B cell (primary cell): ENCODE measurements at regions of chr6 and their contacts with region 1.

Region 1: DNA sequence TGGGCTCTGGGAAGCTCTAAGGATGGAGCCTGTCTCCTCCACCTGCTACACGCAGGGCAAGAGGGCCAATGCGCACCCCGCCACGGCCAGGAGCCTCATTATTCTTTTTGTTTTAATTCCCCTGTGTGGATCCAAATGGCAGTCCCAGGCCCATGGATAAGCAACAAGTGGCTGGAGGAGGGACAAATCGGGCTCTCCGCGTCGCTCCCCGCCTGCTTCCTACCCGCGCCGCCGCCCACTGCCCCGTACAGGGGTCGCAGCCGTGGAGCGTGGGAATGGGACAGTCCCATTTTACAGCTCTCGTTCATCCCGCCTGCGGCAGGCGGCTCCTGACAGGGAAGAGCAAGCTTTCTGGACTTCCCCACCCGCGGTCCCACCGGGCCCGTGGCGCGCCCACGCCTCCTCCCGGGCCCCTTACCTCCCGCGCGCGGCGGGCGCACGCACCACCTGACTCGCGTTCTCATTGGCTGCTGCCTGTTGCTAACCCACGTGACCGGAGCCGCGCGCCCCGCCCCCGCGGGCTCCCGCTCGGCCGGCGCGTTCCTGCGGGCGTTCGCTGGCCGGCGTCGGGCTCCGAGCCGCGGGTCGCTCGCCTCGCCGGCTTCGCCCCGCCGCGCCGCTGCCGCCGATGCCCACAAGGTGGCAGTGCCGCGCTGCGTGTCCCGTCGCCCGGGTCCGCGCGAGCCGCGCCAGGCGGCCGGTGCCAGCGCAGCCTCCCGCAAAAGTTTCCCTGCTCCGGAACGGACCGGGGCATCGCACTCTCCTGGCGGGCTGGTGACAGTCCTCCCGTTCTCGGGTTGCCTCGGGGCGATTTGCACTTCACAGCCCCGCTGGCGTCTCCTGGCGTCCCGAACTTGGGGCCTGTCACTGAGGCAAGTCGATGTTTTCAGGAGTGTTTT is 93.3 kb downstream of the CD83 start:
- DNase-seq: peak; percentile 96
- ATAC-seq: peak; percentile 91
- H3K4me3 ChIP-seq: peak overlapping the region; percentile 3 to 92 (median 82)
- H3K4me3 Mint-ChIP-seq: peak overlapping the region; percentile 90
- H3K27ac ChIP-seq: peak overlapping the region; percentile 92 to 97
- H3K27ac Mint-ChIP-seq: peak overlapping the region; percentile 97
- H3K4me1 ChIP-seq: peaks cover 30 to 33% of the 10 kb centered on the region in 2 donors
- H3K4me1 Mint-ChIP-seq: peaks cover 44% of the 10 kb centered on the region
- H3K27me3 ChIP-seq: no peaks in the 10 kb centered on the region
- H3K27me3 Mint-ChIP-seq: no peaks in the 10 kb centered on the region
- CTCF ChIP-seq: peak; percentile 72

Region 2: GRCh38 chr6:13873285-13874190 is 337.4 kb before region 1 on chr6:
- CTCF ChIA-PET with region 1: no interaction called
- POLR2A ChIA-PET with region 1: no interaction called
- intact Hi-C with region 1: no loop called
- DNase-seq: peak; percentile 83
- ATAC-seq: peak; percentile 94
- H3K4me3 ChIP-seq: peak overlapping the region; percentile 23 to 66 (median 55)
- H3K4me3 Mint-ChIP-seq: peak overlapping the region; percentile 89
- H3K27ac ChIP-seq: no peak overlapping the region
- H3K27ac Mint-ChIP-seq: peak overlapping the region; percentile 15
- H3K4me1 ChIP-seq: peaks cover 15 to 20% of the 10 kb centered on the region in 2 donors
- H3K4me1 Mint-ChIP-seq: peaks cover 19% of the 10 kb centered on the region
- H3K27me3 ChIP-seq: peaks cover 0 to 4% (median 0%) of the 10 kb centered on the region in 4 experiments
- H3K27me3 Mint-ChIP-seq: no peaks in the 10 kb centered on the region
- CTCF ChIP-seq: peak; percentile 87

Region 3: GRCh38 chr6:14396826-14397517 is 186.1 kb after region 1 on chr6:
- CTCF ChIA-PET with region 1: interaction called, 4 read pairs
- POLR2A ChIA-PET with region 1: no interaction called
- intact Hi-C with region 1: loop called (anchors 1 kb)
- DNase-seq: peak; percentile 58
- ATAC-seq: peak; percentile 49
- H3K4me3 ChIP-seq: peak overlapping the region in 1 of 5 experiments; percentile 14
- H3K4me3 Mint-ChIP-seq: peak overlapping the region; percentile 68
- H3K27ac ChIP-seq: no peak overlapping the region
- H3K27ac Mint-ChIP-seq: peak overlapping the region; percentile 54
- H3K4me1 ChIP-seq: peaks cover 17 to 25% of the 10 kb centered on the region in 2 donors
- H3K4me1 Mint-ChIP-seq: peaks cover 26% of the 10 kb centered on the region
- H3K27me3 ChIP-seq: no peaks in the 10 kb centered on the region
- H3K27me3 Mint-ChIP-seq: no peaks in the 10 kb centered on the region
- CTCF ChIP-seq: peak; percentile 35

Region 4: DNA sequence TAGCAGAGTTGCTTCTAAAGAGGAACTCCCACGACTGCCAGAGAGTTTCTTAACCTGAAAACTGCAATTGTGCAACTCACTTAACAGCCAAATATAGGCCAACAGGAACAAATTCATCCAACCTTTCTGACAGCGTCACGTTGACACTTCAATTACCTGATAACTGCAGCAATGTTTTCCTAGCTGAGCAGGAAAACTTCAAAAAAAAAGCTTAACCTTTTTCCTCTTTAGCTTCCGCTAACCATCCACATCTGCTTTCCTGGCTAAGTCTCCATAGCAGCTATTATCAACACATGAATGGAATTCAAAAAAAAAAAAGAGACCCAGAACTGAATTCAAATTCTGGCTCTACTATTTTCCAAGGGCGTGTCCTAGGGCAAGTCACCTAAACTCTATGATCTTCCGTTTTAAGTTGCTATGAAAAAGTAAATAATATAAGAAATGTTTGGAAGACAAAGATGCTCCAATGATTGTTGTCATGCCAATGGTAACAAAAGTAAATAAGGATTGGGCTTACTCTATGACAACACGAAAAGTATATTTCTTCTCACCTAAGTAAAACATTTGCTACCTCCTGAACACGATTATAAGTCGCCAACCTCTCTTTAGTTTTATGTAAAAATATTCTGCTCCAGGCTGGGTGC is 510.3 kb after region 1 on chr6:
- CTCF ChIA-PET with region 1: interaction called, 3 read pairs
- POLR2A ChIA-PET with region 1: no interaction called
- intact Hi-C with region 1: loop called (anchors 5 kb)
- DNase-seq: peak; percentile 67
- ATAC-seq: peak; percentile 46
- H3K4me3 ChIP-seq: no peak overlapping the region
- H3K4me3 Mint-ChIP-seq: peak overlapping the region; percentile 24
- H3K27ac ChIP-seq: peak overlapping the region; percentile 82 to 83
- H3K27ac Mint-ChIP-seq: peak overlapping the region; percentile 59
- H3K4me1 ChIP-seq: peaks cover 77 to 82% of the 10 kb centered on the region in 2 donors
- H3K4me1 Mint-ChIP-seq: peaks cover 77% of the 10 kb centered on the region
- H3K27me3 ChIP-seq: no peaks in the 10 kb centered on the region
- H3K27me3 Mint-ChIP-seq: no peaks in the 10 kb centered on the region
- CTCF ChIP-seq: no peak

Region 5: DNA sequence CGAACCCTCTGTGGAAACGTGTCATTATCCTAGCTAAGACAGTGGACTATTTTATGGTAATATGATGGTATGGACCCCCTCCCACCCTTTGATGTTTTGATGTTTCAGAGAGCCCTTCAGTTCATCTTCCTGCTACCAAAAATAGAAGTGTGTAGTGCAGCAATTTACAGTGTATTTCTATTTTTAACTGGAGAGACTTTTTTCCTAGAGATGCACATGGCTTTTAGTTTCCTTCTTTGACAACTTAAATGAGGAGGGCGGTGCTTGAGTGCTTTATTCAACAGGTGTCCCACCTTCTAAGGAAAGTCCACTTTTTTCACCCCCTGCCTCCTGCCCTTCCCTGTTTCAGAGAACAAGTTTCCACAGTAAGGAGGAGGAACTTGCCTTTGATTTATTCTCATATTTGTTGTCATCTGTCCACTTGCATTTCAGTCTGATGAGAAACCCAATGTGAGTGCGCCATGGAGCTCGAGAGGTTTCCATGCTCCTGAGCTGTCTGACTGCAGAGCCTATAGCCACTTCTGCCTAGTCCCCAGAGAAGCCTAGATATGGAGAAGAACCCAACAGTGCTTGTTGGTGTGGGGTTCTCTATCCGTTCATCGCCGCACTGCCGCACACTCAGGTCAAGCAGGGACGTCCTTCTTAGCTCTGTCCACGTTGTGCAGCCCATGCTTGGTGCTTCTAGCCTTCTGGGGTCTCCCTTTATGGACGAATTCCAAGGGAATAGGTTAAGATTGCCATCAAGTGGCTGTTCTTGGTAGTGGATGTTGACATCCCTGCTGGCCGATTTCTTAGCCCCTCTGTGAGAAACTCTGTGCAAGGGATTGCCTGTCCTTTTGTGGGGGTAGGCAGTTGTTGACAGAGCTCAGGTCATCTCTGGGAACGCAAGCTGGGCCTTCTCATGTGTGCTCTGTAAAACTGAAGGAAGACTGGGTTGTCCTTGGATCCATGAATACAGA is 1179.1 kb after region 1 on chr6:
- CTCF ChIA-PET with region 1: interaction called, 6 read pairs
- POLR2A ChIA-PET with region 1: no interaction called
- intact Hi-C with region 1: loop called (anchors 1 kb)
- DNase-seq: peak; percentile 68
- ATAC-seq: peak; percentile 51
- H3K4me3 ChIP-seq: peak overlapping the region in 1 of 5 experiments; percentile 4
- H3K4me3 Mint-ChIP-seq: peak overlapping the region; percentile 33
- H3K27ac ChIP-seq: peak overlapping the region; percentile 4 to 31
- H3K27ac Mint-ChIP-seq: peak overlapping the region; percentile 21
- H3K4me1 ChIP-seq: peaks cover 52 to 54% of the 10 kb centered on the region in 2 donors
- H3K4me1 Mint-ChIP-seq: peaks cover 69% of the 10 kb centered on the region
- H3K27me3 ChIP-seq: no peaks in the 10 kb centered on the region
- H3K27me3 Mint-ChIP-seq: no peaks in the 10 kb centered on the region
- CTCF ChIP-seq: peak; percentile 67